Activated naive CD4-positive, alpha-beta T cell treated with anti-CD3 and anti-CD28 coated beads for 36 hours (primary cell): ENCODE measurements at regions of chr1 and their contacts with region 1.

Region 1: GRCh38 chr1:179293340-179294327 is at the start of gene SOAT1:
- DNase-seq: peak; percentile 93
- H3K4me3 Mint-ChIP-seq: peak within 1 kb of the TSS; percentile 93
- H3K27ac Mint-ChIP-seq: peak within 1 kb of the TSS; percentile 89
- H3K4me1 Mint-ChIP-seq: peaks cover 44% of the 10 kb centered on the region
- H3K27me3 Mint-ChIP-seq: no peaks in the 10 kb centered on the region
- total RNA-seq, gene SOAT1: 38.8 to 42.4 TPM

Region 2: DNA sequence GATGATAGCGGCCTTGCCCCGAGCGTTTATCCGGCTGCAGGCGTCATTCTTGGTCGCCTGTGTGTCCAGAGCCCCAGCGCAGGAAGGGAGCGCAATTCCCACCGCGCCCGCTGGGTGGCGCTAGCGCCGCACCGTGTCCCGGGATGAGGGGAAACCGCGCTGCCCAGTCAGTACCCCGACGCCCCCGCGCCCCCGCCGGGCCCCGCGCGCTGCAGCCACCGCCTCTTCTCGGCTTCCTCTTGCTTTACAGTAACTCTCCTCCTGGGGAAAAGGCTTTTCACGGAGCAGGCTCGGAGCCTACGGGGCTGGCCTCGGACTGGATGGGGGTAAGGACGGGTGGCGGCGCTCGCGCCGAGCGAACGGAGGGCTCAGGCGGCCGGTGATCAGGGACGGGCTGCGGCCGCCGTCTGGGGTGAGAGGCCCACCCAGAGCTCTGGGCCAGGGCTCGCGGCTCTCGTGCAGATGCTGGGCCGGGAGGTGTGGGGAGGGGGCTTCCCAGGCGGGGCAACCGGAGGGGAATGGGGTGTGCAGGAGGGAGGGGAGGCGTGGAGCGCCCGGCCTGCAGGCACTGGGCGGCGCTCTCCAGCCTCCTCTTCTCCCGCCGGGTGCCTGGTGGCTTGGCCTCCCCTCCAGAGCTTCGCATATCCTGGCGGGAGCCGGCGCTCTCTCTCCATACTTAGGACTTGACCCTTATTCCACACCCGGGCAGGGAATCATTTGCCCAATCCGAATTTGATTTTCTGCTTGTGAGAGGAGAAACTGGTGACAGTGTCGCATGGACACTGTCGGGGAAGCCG is 750.9 kb before region 1 on chr1:
- CTCF ChIA-PET with region 1: no interaction called
- intact Hi-C with region 1: loop called (anchors 2 kb)
- DNase-seq: peak; percentile 92
- H3K4me3 Mint-ChIP-seq: peak overlapping the region; percentile 87
- H3K27ac Mint-ChIP-seq: peak overlapping the region; percentile 72
- H3K4me1 Mint-ChIP-seq: peaks cover 4% of the 10 kb centered on the region
- H3K27me3 Mint-ChIP-seq: no peaks in the 10 kb centered on the region

Region 3: DNA sequence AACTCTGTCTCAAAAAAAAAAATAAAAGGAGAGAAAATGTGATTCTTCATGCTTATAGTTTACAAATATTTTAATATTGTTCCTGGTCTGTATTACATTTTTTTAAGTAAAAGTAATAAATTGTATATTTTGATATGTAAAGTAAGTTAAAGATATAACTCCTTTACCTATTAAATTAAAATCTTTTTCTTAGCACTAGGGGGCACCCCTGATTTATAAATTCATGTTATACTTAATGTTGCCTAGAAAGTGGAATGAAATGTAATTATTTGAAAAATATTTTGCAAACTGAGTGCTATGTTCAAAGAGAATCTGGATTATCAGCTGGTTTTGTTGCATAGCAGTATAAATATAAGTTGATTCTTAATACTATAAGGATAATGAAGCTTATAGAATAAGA is 519.4 kb before region 1 on chr1:
- CTCF ChIA-PET with region 1: no interaction called
- intact Hi-C with region 1: loop called (anchors 1 kb)
- DNase-seq: no peak
- H3K4me3 Mint-ChIP-seq: no peak overlapping the region
- H3K27ac Mint-ChIP-seq: no peak overlapping the region
- H3K4me1 Mint-ChIP-seq: no peaks in the 10 kb centered on the region
- H3K27me3 Mint-ChIP-seq: no peaks in the 10 kb centered on the region

Region 4: GRCh38 chr1:179105350-179105749 is 188.3 kb before region 1 on chr1:
- CTCF ChIA-PET with region 1: no interaction called
- intact Hi-C with region 1: loop called (anchors 1 kb)
- DNase-seq: peak; percentile 15
- H3K4me3 Mint-ChIP-seq: no peak overlapping the region
- H3K27ac Mint-ChIP-seq: no peak overlapping the region
- H3K4me1 Mint-ChIP-seq: no peaks in the 10 kb centered on the region
- H3K27me3 Mint-ChIP-seq: no peaks in the 10 kb centered on the region

Region 5: GRCh38 chr1:179129702-179130473 is 163.7 kb before region 1 on chr1:
- CTCF ChIA-PET with region 1: interaction called, 4 read pairs
- intact Hi-C with region 1: loop called (anchors 2 kb)
- DNase-seq: peak; percentile 24
- H3K4me3 Mint-ChIP-seq: peak overlapping the region; percentile 60
- H3K27ac Mint-ChIP-seq: peak overlapping the region; percentile 87
- H3K4me1 Mint-ChIP-seq: peaks cover 37% of the 10 kb centered on the region
- H3K27me3 Mint-ChIP-seq: no peaks in the 10 kb centered on the region

Region 6: GRCh38 chr1:179190861-179191260 is 102.8 kb before region 1 on chr1:
- CTCF ChIA-PET with region 1: no interaction called
- intact Hi-C with region 1: loop called (anchors 2 kb)
- DNase-seq: no peak
- H3K4me3 Mint-ChIP-seq: no peak overlapping the region
- H3K27ac Mint-ChIP-seq: no peak overlapping the region
- H3K4me1 Mint-ChIP-seq: peaks cover 20% of the 10 kb centered on the region
- H3K27me3 Mint-ChIP-seq: no peaks in the 10 kb centered on the region

Region 7: DNA sequence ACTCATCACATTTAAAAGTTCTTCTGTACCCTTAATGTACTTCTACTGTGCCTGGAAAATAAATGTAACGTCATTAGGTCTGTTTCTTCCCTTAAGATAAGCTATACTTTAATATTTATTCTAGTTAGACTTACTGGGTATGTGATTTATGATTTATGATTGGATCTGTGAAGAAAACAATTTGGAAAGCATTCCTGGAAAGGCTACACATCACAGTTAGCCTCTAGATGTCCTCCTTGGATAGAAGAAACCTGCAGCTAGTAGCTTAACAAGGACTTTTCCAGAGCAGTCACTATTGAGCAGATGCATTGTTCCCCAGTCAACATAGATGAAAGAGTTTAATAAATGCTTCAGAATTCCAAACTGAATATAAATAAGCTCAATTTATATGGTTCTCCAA is 42.0 kb before region 1 on chr1:
- CTCF ChIA-PET with region 1: interaction called, 4 read pairs
- intact Hi-C with region 1: loop called (anchors 5 kb)
- DNase-seq: no peak
- H3K4me3 Mint-ChIP-seq: no peak overlapping the region
- H3K27ac Mint-ChIP-seq: no peak overlapping the region
- H3K4me1 Mint-ChIP-seq: no peaks in the 10 kb centered on the region
- H3K27me3 Mint-ChIP-seq: no peaks in the 10 kb centered on the region